Heart left ventricle (tissue), 16 donors: ENCODE measurements at regions of chr2 and their contacts with region 1.

Region 1: GRCh38 chr2:158456309-158457066 is at the starts of genes CCDC148 and PKP4:
- DNase-seq: peak; percentile 91 to 94 (median 93)
- ATAC-seq: peak; percentile 97 to 98 (median 98)
- H3K4me3 ChIP-seq: peak within 1 kb of the TSS; percentile 66 to 98 (median 87)
- H3K27ac ChIP-seq: peak within 1 kb of the TSS; percentile 89 to 98 (median 96)
- H3K4me1 ChIP-seq: peaks cover 0 to 37% (median 21%) of the 10 kb centered on the region in 12 donors
- H3K27me3 ChIP-seq: no peaks in the 10 kb centered on the region
- CTCF ChIP-seq: peak in 7 of 12 donors; percentile 16 to 47 (median 30)
- POLR2A ChIP-seq: peak in 1 of 2 donors; percentile 59
- total RNA-seq, gene CCDC148: 0.31 to 1.2 (median 0.93) TPM in 8 of 9 donors, not detected in the other
- total RNA-seq, gene PKP4: 34.1 to 66.7 (median 49.4) TPM

Region 2: GRCh38 chr2:157777427-157777826 is 679.1 kb before region 1 on chr2:
- intact Hi-C with region 1: loop called in 1 of 10 experiments (anchors 5 kb)
- DNase-seq: peak in 1 of 5 donors; percentile 32
- ATAC-seq: no peak
- H3K4me3 ChIP-seq: no peak overlapping the region
- H3K27ac ChIP-seq: no peak overlapping the region
- H3K4me1 ChIP-seq: peaks cover 0 to 13% (median 9%) of the 10 kb centered on the region in 12 donors
- H3K27me3 ChIP-seq: no peaks in the 10 kb centered on the region
- CTCF ChIP-seq: peak; percentile 52 to 83 (median 73)
- POLR2A ChIP-seq: no peak

Region 3: GRCh38 chr2:158034199-158034866 is 422.2 kb before region 1 on chr2:
- intact Hi-C with region 1: loop called in 4 of 10 experiments (anchors 5 to 10 kb)
- DNase-seq: peak in 2 of 5 donors; percentile 19 to 29
- ATAC-seq: peak in 3 of 4 donors; percentile 73 to 79 (median 77)
- H3K4me3 ChIP-seq: no peak overlapping the region
- H3K27ac ChIP-seq: no peak overlapping the region
- H3K4me1 ChIP-seq: peaks cover 0 to 5% (median 0%) of the 10 kb centered on the region in 12 donors
- H3K27me3 ChIP-seq: no peaks in the 10 kb centered on the region
- CTCF ChIP-seq: peak; percentile 32 to 63 (median 42)
- POLR2A ChIP-seq: no peak

Region 4: DNA sequence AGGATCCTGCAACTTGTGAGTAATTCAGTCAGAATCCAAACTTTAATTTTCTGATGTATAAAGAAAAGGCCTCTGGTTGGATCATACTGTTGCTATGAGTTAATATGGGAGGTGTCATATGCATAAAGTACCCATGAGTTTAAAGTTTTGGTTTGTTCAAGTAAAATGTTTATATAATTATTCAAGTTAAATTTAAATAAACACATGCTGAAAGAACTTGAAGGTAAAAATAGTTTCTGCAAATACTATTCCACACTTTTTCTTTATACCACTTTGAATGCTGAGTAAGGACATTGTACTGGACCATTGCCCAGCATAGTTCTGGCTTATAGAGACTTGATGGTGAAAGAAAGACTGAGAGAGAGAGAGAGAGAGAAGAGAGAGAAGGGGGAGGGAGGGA is 30.9 kb after region 1 on chr2:
- intact Hi-C with region 1: no loop called
- DNase-seq: no peak
- ATAC-seq: peak in 3 of 4 donors; percentile 51 to 72 (median 64)
- H3K4me3 ChIP-seq: no peak overlapping the region
- H3K27ac ChIP-seq: no peak overlapping the region
- H3K4me1 ChIP-seq: peaks cover 0 to 62% (median 38%) of the 10 kb centered on the region in 12 donors
- H3K27me3 ChIP-seq: no peaks in the 10 kb centered on the region
- CTCF ChIP-seq: no peak
- POLR2A ChIP-seq: no peak

Region 5: DNA sequence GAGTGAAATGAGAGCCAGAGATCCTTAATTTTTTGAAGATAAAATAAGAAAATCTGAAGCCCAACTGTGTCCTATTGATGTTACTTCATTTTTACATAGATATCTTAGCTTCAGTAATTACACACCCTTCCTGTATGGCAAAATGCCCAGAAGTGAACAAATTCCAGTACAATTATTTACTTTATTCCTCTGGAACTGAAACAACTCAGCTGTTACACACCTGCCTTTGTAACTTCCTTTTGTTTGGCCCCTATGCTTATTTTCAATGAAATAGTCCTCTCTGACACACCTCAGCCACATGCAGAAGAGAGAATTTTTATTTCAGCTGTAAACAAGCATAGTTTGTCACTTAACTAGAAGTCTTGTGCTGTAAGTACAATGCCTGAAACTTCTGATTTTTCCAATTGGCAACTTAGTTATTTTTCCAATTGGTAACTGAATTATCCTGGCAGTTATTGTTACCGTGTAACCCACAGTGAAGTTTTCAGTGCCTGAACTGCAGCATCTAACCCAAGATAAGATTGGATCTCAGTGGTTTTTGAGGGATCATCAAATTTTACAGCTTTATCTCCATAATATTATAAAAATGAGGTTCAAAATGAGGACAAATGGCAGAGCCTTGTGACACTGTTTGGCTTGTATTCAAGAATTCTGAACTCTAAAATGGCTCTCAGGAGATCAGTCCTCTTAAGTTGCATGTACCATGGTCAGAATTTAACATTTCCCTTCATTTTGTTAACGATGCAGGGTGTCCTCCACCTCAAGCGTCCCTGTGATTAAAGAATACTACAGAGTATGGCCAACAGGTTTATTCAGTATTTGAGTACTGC is 82.9 kb after region 1 on chr2:
- intact Hi-C with region 1: loop called in 2 of 10 experiments (anchors 5 kb)
- DNase-seq: peak in 1 of 5 donors; percentile 39
- ATAC-seq: peak in 3 of 4 donors; percentile 59 to 86 (median 65)
- H3K4me3 ChIP-seq: no peak overlapping the region
- H3K27ac ChIP-seq: peak overlapping the region in 7 of 12 donors; percentile 4 to 53 (median 42)
- H3K4me1 ChIP-seq: peaks cover 0 to 31% (median 15%) of the 10 kb centered on the region in 12 donors
- H3K27me3 ChIP-seq: no peaks in the 10 kb centered on the region
- CTCF ChIP-seq: no peak
- POLR2A ChIP-seq: no peak

Region 6: DNA sequence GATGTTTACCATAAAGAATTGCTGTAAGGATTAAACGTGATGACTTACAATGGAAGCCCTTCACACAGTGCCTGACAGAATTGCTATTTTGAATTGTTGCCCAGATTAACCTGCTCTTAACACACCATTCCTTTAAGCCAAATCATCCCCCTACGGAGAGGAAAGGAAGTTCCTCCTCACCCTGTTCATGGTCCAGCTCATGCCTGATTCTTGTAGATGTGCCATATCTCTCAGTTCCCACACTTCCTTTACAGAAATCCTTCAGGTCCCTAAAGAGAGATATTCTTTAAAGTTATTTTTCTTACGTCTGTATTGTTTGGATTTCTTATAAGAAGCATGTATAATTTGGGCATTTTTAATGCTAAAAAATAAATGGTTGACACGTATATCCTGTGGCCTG is 211.1 kb after region 1 on chr2:
- intact Hi-C with region 1: loop called in 3 of 10 experiments (anchors 5 to 10 kb)
- DNase-seq: no peak
- ATAC-seq: peak in 3 of 4 donors; percentile 50 to 68 (median 55)
- H3K4me3 ChIP-seq: no peak overlapping the region
- H3K27ac ChIP-seq: peak overlapping the region in 11 of 12 donors; percentile 10 to 76 (median 57)
- H3K4me1 ChIP-seq: peaks cover 4 to 66% (median 38%) of the 10 kb centered on the region in 12 donors
- H3K27me3 ChIP-seq: no peaks in the 10 kb centered on the region
- CTCF ChIP-seq: no peak
- POLR2A ChIP-seq: no peak

Region 7: DNA sequence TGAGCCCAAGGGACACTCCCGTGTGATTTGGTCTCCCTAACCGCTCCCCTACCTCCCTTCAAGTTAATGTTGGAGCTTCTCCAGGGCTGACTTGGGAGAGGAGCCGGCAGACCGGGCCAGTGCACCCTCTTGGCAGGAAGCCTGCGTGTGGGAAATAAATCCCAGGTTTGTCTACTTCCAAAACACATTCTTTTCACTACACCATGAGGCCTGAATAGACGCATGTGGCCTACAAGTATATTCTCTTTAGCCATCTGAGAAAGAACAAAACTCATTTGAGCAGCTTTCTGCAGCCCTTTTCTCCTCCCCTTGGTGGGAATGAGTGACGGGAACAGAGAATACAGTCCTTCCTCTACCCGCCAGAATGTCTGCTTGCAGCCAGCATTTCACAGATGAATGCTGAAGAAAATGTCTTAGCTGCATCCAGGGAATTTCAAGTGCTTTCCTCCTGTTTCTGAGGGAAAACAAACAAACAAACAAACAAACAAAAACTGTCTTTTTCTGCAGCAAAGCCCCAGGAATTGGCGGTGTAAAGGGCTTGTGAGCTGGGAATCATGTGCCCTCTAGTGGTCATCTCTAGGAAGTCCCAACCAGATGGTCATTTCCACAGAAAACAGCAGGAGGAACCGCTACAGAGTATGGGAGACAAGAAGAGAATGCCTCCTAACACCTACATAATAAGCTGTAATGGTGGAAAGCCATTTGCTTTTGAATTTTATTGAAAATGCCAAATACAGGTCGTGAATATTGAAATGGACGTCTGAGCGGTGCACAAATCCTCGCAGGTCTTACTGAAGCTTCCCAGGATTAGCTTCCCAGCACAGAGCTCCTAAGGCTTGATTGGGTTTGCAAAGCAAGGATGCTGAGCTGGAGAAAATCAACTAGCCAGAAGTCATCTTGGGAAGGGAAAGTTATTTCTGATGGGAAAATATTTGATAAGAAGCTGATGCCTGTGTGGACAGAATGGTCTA is 297.4 kb after region 1 on chr2:
- intact Hi-C with region 1: loop called in 7 of 10 experiments (anchors 5 kb)
- DNase-seq: peak in 3 of 5 donors; percentile 45 to 52 (median 47)
- ATAC-seq: peak; percentile 77 to 94 (median 86)
- H3K4me3 ChIP-seq: peak overlapping the region in 11 of 12 donors; percentile 7 to 52 (median 31)
- H3K27ac ChIP-seq: peak overlapping the region in 4 of 12 donors; percentile 0 to 56 (median 18)
- H3K4me1 ChIP-seq: peaks cover 0 to 12% (median 8%) of the 10 kb centered on the region in 12 donors
- H3K27me3 ChIP-seq: no peaks in the 10 kb centered on the region
- CTCF ChIP-seq: peak; percentile 81 to 96 (median 90)
- POLR2A ChIP-seq: no peak